Activated CD8-positive, alpha-beta T cell treated with anti-CD3 and anti-CD28 coated beads, Interleukin-2, amount 10 ng/mL, durations not matched to agents 7 days and 5 days (primary cell): ENCODE measurements at regions of chr9 and their contacts with region 1.

Region 1: DNA sequence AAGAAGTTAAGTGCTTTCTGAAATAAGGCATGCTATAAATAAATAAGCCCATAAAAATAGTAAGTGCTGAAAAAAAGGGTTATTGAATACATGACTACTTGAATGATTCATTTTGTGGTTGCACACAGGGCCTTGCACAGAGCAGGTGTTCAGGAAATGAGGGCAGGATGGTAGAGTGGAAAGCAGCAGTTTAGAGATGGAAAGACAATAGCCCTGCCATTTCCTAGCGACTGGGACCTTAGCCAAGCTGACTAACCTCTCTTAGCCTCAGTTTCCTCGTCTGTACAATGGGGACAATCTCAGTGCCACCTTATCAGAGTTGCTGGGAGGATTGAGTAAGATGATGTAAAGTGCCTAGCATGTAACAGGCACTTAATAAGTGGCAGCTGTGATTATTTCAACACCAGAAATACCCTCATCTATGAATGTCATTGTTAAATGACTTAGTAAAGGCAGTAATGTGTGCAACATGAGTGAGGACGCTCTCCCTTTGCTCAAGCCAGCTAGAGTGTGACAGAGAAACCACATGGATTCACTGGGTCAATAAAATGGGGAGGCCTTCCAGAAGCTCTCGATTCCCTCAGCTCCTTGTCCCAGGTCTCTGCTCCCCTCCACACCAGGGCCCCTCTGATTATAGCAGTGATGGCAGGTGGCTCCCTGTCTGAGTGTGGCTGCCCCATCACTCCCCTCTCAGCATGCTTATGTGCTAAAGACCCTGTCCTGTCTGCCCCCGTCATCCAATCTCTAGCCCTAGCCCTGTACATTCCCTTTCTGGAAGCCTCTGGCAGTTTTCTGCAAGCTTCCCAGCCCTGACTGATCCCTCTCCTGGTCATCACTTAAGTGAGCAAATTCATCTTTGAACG is 16.0 kb upstream of the PHF19 start:
- DNase-seq: peak; percentile 80
- ATAC-seq: peak; percentile 65
- H3K4me3 Mint-ChIP-seq: peak overlapping the region; percentile 70
- H3K27ac Mint-ChIP-seq: peak overlapping the region; percentile 95
- H3K4me1 Mint-ChIP-seq: peaks cover 90% of the 10 kb centered on the region
- H3K27me3 Mint-ChIP-seq: no peaks in the 10 kb centered on the region

Region 2: DNA sequence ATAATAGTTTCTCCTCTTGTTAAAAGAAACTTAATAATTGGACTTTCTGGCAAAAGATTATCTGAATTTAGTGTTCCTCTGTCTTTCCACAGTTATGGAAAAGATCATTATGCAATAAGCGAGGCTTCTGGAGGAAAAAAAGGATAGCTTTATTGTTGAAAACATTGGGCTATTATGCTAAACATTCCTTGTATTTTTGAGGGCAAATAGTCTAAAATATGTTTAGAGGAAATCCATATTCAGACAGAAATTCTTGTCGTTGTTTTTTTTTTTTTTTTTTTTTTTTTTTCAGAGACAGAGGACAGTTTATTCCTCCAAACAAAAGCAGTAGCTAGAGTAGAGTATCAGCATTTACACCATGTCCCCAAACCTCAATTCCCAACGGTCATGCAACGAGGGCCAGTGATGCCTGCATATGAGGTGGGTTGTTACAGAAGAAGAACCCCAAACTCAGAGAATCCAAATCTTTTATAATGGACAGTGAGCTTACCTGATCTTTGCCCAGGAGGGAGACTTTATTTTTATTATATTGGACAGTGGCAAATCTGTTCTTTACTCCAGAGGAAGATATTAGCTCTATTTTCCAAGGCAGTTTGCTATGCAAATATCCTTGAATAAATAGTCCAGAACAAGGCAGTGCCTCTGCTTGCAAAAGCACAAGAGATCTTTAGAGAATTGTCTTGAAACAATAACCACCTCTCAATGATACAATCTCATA is 264.6 kb before region 1 on chr9:
- CTCF ChIA-PET with region 1: no interaction called
- POLR2A ChIA-PET with region 1: no interaction called
- DNase-seq: no peak
- ATAC-seq: no peak
- H3K4me3 Mint-ChIP-seq: no peak overlapping the region
- H3K27ac Mint-ChIP-seq: no peak overlapping the region
- H3K4me1 Mint-ChIP-seq: peaks cover 3% of the 10 kb centered on the region
- H3K27me3 Mint-ChIP-seq: peaks cover 4% of the 10 kb centered on the region

Region 3: GRCh38 chr9:120875954-120876841 is 16.8 kb before region 1 on chr9:
- CTCF ChIA-PET with region 1: interaction called, 54 read pairs
- POLR2A ChIA-PET with region 1: interaction called, 306 read pairs
- DNase-seq: peak; percentile 96
- ATAC-seq: peak; percentile 57
- H3K4me3 Mint-ChIP-seq: peak overlapping the region; percentile 88
- H3K27ac Mint-ChIP-seq: peak overlapping the region; percentile 95
- H3K4me1 Mint-ChIP-seq: peaks cover 77% of the 10 kb centered on the region
- H3K27me3 Mint-ChIP-seq: no peaks in the 10 kb centered on the region

Region 4: DNA sequence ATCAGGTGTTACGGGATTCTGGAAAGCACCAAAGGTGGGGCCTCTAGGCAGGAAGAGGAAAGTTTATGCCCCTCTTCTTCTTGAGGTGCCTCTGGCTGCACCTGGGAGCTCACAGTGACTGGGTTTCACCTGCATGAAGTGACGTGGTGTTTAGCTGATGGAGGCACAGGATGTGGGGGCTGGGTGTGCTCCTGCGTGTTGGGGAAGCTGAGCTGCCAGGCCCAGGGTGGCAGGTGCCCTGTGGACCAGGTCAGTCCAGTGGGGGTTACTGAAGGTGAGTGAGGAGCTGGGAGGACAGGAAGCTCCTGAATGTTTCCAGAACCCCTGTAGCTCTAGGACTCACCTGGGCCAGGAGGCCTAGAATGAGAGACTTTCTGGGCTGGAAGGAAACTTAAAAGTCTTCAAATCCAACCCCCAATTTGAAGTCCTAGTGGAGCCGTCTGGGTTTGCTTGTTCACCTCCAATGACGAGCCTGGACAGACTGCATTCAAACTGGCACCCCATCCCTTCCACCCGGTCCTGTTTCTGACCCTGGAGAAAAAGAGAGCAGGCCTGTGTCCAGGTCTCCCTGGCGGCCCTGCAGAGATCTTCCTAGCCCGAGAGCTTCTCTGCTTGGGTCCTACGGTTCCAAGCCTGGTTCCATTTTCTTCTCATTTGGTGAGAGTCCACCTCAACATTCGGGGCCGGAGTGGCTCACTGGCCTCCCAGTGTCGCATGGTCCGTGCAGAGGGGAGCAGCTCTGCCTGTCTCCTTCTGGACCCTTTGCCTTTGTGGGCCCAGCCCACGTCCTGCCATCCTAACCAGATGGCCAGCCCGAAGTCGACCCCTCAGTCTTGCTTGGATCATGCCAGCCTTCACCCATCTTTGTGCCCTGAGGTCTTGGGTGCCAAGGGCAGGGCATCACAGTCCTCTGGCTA is 11.3 kb after region 1 on chr9:
- CTCF ChIA-PET with region 1: interaction called, 9 read pairs
- POLR2A ChIA-PET with region 1: interaction called, 72 read pairs
- DNase-seq: peak; percentile 69
- ATAC-seq: peak; percentile 55
- H3K4me3 Mint-ChIP-seq: no peak overlapping the region
- H3K27ac Mint-ChIP-seq: peak overlapping the region; percentile 88
- H3K4me1 Mint-ChIP-seq: peaks cover 90% of the 10 kb centered on the region
- H3K27me3 Mint-ChIP-seq: no peaks in the 10 kb centered on the region

Region 5: DNA sequence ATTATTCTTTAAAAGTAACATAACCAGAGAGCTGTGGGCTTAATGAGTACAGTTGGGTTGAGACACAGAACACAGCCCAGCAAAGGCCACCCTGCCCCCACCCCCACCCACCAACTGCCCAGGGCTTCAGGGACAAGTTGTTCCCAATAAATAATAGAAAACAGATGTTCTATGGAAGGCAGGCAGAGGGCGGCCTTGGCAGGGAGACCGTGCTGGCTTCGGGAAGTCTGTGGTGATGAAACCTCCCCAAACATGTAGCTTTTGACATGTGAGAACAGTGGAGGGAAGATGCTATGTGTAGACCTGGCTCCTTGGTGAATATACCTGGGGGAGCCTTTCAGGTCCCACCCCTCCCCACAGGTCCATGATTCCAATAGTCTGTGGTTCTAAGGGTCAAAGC is 23.6 kb after region 1 on chr9:
- CTCF ChIA-PET with region 1: interaction called, 6 read pairs
- POLR2A ChIA-PET with region 1: interaction called, 205 read pairs
- DNase-seq: no peak
- ATAC-seq: no peak
- H3K4me3 Mint-ChIP-seq: peak overlapping the region; percentile 34
- H3K27ac Mint-ChIP-seq: peak overlapping the region; percentile 80
- H3K4me1 Mint-ChIP-seq: peaks cover 86% of the 10 kb centered on the region
- H3K27me3 Mint-ChIP-seq: no peaks in the 10 kb centered on the region

Region 6: DNA sequence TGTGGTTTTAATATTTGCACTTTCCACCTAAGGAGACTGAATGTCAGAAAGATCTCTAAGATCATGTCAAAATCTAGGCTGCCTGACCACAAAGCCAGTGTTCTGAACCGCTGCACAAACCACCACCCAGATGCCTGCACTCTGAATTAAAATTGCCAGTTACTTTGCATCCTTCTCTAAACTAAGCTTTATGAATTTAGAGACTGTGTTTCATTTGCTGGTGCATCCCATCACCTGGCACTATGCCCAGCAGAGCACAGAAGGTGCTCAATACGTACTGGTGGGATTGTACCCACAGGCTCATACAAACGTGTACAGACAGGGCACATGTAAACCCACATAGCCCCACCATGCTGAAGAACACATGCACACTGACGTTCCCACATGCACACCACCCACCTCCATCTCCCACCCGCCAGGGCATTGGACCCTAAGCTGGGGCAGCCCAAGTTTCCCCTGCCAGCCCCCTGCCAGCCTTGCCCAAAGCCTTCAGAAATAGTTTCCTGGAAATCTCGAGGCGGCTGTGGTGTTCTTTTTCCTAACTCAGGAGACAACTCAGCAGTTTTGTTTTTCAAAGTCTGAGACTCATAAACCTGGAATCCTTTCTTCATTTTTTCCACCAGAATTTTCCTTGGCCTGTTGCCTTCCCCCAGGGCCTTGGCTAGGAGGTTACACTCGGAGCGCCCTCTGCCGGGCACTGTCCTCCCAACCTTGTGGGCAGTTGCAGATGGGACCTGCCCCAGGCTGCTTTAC is 43.2 kb after region 1 on chr9:
- CTCF ChIA-PET with region 1: interaction called, 23 read pairs
- POLR2A ChIA-PET with region 1: interaction called, 141 read pairs
- DNase-seq: peak; percentile 91
- ATAC-seq: peak; percentile 72
- H3K4me3 Mint-ChIP-seq: peak overlapping the region; percentile 15
- H3K27ac Mint-ChIP-seq: peak overlapping the region; percentile 77
- H3K4me1 Mint-ChIP-seq: peaks cover 62% of the 10 kb centered on the region
- H3K27me3 Mint-ChIP-seq: peaks cover 5% of the 10 kb centered on the region